PC-9 (cell line): ENCODE measurements at regions of chr19 and their contacts with region 1.

Region 1: GRCh38 chr19:11090054-11090900 is 1.0 kb downstream of the LDLR start:
- DNase-seq: peak; percentile 93 to 96
- H3K4me3 ChIP-seq: peak overlapping the region; percentile 90
- H3K27ac ChIP-seq: peak overlapping the region; percentile 98
- H3K4me1 ChIP-seq: peaks cover 68% of the 10 kb centered on the region
- H3K27me3 ChIP-seq: no peaks in the 10 kb centered on the region
- CTCF ChIP-seq: no peak

Region 2: GRCh38 chr19:10870955-10871603 is 219.2 kb before region 1 on chr19 and contains the start of gene CARM1:
- CTCF ChIA-PET with region 1: interaction called, 7 read pairs
- POLR2A ChIA-PET with region 1: interaction called, 10 read pairs
- intact Hi-C with region 1: no loop called
- DNase-seq: peak; percentile 90 to 99
- H3K4me3 ChIP-seq: peak within 1 kb of the TSS; percentile 85
- H3K27ac ChIP-seq: peak within 1 kb of the TSS; percentile 9; the same call in 1 of the 2 replicates
- H3K4me1 ChIP-seq: peaks cover 17% of the 10 kb centered on the region
- H3K27me3 ChIP-seq: no peaks in the 10 kb centered on the region
- CTCF ChIP-seq: peak; percentile 45; the same call in 1 of the 2 replicates
- total RNA-seq, gene CARM1: 56.0 and 63.7 TPM in 2 replicates

Region 3: GRCh38 chr19:10936661-10937084 is 153.6 kb before region 1 on chr19:
- CTCF ChIA-PET with region 1: interaction called, 6 read pairs
- POLR2A ChIA-PET with region 1: interaction called, 6 read pairs
- intact Hi-C with region 1: loop called (anchors 1 kb)
- DNase-seq: peak; percentile 45 to 75
- H3K4me3 ChIP-seq: no peak overlapping the region
- H3K27ac ChIP-seq: no peak overlapping the region
- H3K4me1 ChIP-seq: peaks cover 49% of the 10 kb centered on the region
- H3K27me3 ChIP-seq: no peaks in the 10 kb centered on the region
- CTCF ChIP-seq: peak; percentile 84

Region 4: DNA sequence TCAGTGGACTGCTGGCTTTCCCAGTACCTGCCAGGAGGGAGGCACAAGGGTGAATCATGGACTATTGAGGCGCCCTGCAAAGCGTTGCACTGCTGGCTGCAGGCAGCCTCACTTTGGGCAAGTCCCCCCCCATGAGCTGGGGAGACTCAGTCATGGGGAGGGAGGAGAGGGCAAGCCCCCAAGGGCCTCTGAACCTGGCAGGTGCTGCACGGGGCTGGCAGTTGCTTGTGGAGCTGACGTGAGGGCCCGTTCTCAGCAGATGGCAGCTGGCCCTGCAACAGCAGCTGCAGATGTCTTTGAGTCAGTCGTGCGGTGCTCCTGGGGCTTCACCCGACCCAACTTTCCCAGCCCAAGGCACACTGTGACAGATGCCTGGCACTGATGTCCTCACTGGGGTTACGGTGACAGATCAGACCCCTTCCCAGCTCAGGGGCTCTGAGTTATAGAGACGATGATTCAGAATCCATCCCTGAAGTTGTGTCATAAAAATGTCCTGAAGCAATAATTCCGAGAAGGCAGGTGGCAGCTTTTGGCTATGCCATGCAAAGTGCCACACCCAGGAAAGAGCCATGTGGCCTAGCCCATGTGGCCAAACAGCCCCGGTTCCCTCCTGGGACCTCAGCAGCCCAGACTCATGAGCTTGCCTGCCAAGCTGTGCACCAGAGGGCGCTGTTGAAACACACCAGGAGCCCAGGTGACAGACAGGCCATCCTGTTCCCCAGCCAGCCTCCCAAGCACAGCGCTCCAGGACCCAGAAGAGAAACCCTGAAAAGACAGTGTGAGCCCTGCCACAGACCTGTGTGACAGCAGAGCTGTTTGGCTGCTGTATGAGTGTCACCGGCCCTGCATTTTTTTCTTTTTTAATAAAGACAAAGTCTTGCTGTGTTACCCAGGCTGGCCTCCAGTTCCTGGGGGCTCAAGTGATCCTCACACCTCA is 54.6 kb before region 1 on chr19:
- CTCF ChIA-PET with region 1: interaction called, 16 read pairs
- POLR2A ChIA-PET with region 1: interaction called, 3 read pairs
- intact Hi-C with region 1: loop called (anchors 1 kb)
- DNase-seq: peak; percentile 94 to 96
- H3K4me3 ChIP-seq: no peak overlapping the region
- H3K27ac ChIP-seq: peak overlapping the region; percentile 28
- H3K4me1 ChIP-seq: peaks cover 11% of the 10 kb centered on the region
- H3K27me3 ChIP-seq: no peaks in the 10 kb centered on the region
- CTCF ChIP-seq: peak; percentile 96